Activated CD8-positive, alpha-beta memory T cell treated with anti-CD3 and anti-CD28 coated beads, Interleukin-2, amount 10 ng/mL, durations not matched to agents 7 days and 5 days (primary cell): ENCODE measurements at regions of chr9 and their contacts with region 1.

Region 1: DNA sequence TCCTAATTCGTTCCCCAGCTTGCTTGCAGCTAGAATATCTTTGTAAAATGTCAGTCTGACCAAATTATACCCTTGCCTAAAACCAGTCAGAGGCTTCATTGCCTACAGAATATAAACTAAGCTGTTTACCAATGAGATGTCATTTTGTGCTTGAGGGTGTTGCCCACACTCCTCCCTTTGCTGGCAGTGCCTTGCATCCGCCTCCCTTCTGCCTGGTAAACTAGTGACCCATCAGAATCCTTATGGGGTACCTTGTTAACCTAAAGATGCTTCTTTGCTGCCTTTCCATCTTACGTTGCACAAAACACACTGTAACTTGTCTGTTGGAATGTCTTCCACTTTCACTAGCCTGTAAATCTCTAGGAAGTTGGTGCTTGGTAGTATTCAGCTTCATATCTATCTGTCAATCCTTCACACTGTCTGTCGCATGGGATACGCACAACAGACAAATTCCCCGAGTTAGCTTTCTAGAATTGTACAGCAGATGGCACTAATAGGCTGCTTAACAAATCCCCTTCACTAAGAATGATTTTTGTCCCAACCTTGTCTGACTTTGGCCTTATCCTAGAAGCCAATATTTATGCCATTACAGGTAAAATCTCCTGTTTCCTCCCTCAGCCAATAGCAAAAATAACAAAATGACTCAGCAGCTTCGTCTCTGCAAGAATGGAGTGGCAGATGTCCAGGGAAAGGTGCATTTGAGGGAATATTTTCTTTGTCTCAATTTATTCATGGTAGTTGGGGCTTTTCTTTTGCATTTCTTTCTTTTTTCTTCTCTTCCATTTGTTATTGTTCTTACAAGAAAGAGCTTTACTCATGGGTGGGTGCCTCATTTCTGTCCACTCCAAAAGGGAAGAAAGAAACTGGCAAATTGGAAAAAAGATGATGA is 3.0 kb downstream of the NUDT2 start:
- DNase-seq: no peak
- ATAC-seq: no peak
- H3K4me3 Mint-ChIP-seq: no peak overlapping the region
- H3K27ac Mint-ChIP-seq: no peak overlapping the region
- H3K4me1 Mint-ChIP-seq: peaks cover 30% of the 10 kb centered on the region
- H3K27me3 Mint-ChIP-seq: no peaks in the 10 kb centered on the region

Region 2: GRCh38 chr9:34376596-34377403 is 44.5 kb after region 1 on chr9 and contains the start of gene MYORG:
- CTCF ChIA-PET with region 1: interaction called, 143 read pairs
- DNase-seq: peak; percentile 99
- ATAC-seq: peak; percentile 82
- H3K4me3 Mint-ChIP-seq: peak within 1 kb of the TSS; percentile 83
- H3K27ac Mint-ChIP-seq: peak within 1 kb of the TSS; percentile 82
- H3K4me1 Mint-ChIP-seq: peaks cover 40% of the 10 kb centered on the region
- H3K27me3 Mint-ChIP-seq: peaks cover 4% of the 10 kb centered on the region
- total RNA-seq, gene MYORG: 3.7 to 4.2 TPM